H1 (cell line): ENCODE measurements at regions of chr12 and their contacts with region 1.

Region 1: DNA sequence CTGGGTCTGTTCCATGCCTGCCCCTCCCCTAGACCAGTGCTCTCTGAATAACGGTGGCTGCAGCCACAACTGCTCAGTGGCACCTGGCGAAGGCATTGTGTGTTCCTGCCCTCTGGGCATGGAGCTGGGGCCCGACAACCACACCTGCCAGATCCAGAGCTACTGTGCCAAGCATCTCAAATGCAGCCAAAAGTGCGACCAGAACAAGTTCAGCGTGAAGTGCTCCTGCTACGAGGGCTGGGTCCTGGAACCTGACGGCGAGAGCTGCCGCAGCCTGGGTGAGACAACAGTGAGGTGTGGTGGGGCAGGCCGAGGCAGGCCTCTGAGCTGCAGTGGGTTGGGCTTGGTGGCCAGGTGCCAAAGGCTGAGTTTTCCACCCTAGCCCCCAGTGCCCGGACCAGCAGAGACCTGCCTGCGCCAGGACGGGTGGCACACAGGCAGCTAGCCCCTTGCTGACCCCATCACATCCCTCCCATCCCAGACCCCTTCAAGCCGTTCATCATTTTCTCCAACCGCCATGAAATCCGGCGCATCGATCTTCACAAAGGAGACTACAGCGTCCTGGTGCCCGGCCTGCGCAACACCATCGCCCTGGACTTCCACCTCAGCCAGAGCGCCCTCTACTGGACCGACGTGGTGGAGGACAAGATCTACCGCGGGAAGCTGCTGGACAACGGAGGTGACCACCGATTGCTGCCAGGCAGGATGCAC is 28.2 kb upstream of the LRP1-AS start:
- DNase-seq: peak; percentile 50 to 98
- H3K4me3 ChIP-seq: no peak overlapping the region
- H3K27ac ChIP-seq: no peak overlapping the region
- H3K4me1 ChIP-seq: no peaks in the 10 kb centered on the region
- H3K27me3 ChIP-seq: no peaks in the 10 kb centered on the region
- CTCF ChIP-seq: peak in 2 of 3 experiments; percentile 87 to 93; a peak in 3 of 4 replicates
- EP300 ChIP-seq: no peak
- POLR2A ChIP-seq: no peak
- RAD21 ChIP-seq: peak; percentile 45 to 61

Region 2: GRCh38 chr12:57069523-57069922 is 106.1 kb before region 1 on chr12:
- CTCF ChIA-PET with region 1: interaction called, 11 read pairs
- POLR2A ChIA-PET with region 1: no interaction called
- DNase-seq: no peak
- H3K4me3 ChIP-seq: no peak overlapping the region
- H3K27ac ChIP-seq: no peak overlapping the region
- H3K4me1 ChIP-seq: no peaks in the 10 kb centered on the region
- H3K27me3 ChIP-seq: no peaks in the 10 kb centered on the region
- CTCF ChIP-seq: peak in 2 of 3 experiments; percentile 90 to 94; a peak in 3 of 4 replicates
- EP300 ChIP-seq: no peak
- POLR2A ChIP-seq: no peak
- RAD21 ChIP-seq: peak; percentile 95 to 97

Region 3: GRCh38 chr12:57135527-57136326 is 39.9 kb before region 1 on chr12:
- CTCF ChIA-PET with region 1: interaction called, 305 read pairs
- POLR2A ChIA-PET with region 1: interaction called, 55 read pairs
- DNase-seq: no peak
- H3K4me3 ChIP-seq: peak overlapping the region in 1 of 4 experiments; percentile 47; a peak in 4 of 8 replicates
- H3K27ac ChIP-seq: peak overlapping the region; percentile 78
- H3K4me1 ChIP-seq: peaks cover 22 to 53% (median 30%) of the 10 kb centered on the region in 4 experiments
- H3K27me3 ChIP-seq: no peaks in the 10 kb centered on the region
- CTCF ChIP-seq: no peak
- EP300 ChIP-seq: no peak
- POLR2A ChIP-seq: no peak; a peak in 1 of 3 replicates
- RAD21 ChIP-seq: no peak

Region 4: DNA sequence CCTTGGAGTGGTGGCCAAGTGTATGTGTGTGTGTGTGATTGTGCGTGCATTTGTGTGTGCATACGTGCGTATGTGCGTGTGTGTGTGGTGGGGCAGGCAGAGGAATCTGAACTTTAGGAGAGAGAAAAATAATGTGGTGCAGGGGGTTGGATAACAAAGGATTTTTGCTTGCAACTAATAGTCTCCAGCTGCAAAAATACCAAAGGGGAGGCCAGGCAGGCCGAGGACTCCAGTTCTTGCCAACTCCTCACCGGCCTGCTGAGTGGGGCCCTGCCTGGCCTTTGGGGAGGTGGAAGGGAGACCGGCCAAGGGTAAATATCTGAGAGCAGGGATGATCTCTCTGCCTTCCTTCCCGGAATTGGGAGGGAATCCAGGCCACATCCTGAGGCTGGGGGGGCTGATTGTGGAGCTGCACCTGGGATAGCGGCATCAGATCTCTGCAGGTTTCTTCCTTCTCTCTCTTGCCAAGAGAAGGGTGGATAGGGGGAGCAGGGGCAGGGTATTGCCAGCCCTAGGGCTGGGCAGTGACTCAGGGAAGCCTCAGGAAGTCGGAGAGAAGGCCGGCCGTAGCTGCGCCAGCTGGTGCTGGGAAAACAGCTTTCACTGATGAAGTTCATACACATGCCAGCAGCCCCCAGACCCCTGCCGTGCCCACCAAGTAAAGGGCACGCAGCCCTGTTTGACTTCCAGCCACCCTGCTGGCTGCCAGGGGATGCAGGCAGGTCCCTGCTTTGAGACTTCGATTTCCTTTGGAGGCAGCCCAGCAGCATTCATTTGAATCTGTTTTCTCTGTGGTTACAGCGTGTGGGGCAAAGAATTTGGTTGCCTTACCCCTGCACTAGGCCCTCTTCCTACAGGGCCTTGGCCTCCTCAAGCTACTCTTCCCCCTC is 23.6 kb before region 1 on chr12:
- CTCF ChIA-PET with region 1: interaction called, 150 read pairs
- POLR2A ChIA-PET with region 1: interaction called, 75 read pairs
- DNase-seq: no peak
- H3K4me3 ChIP-seq: no peak overlapping the region
- H3K27ac ChIP-seq: no peak overlapping the region
- H3K4me1 ChIP-seq: peaks cover 0 to 4% (median 1%) of the 10 kb centered on the region in 4 experiments; a peak in 4 of 7 replicates
- H3K27me3 ChIP-seq: no peaks in the 10 kb centered on the region
- CTCF ChIP-seq: no peak
- EP300 ChIP-seq: no peak
- POLR2A ChIP-seq: no peak
- RAD21 ChIP-seq: no peak

Region 5: DNA sequence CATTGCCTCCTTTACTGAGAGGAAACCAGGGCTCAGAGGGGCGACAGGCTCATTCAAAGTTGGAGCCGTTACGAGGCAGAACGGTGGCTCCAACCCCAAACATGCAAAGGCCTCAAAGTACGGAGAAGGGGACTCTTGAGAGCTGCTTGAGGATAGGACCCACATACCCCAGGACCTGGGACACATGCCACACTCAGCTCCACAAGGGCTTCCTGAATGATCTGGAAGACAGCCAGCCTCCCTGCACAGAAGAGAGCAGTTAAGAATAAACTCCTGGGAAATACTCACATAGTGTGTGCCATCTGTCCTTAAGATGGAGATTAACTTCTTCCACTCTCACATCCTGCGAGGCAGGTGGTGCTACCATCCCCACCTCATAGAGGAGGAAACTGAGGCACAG is 14.5 kb after region 1 on chr12:
- CTCF ChIA-PET with region 1: interaction called, 389 read pairs
- POLR2A ChIA-PET with region 1: interaction called, 91 read pairs
- DNase-seq: no peak
- H3K4me3 ChIP-seq: no peak overlapping the region
- H3K27ac ChIP-seq: no peak overlapping the region
- H3K4me1 ChIP-seq: no peaks in the 10 kb centered on the region; a peak in 1 of 7 replicates
- H3K27me3 ChIP-seq: no peaks in the 10 kb centered on the region
- CTCF ChIP-seq: no peak
- EP300 ChIP-seq: no peak
- POLR2A ChIP-seq: no peak
- RAD21 ChIP-seq: no peak

Region 6: GRCh38 chr12:57229634-57230380 is 54.2 kb after region 1 on chr12 and contains the start of gene SHMT2:
- CTCF ChIA-PET with region 1: interaction called, 5 read pairs
- POLR2A ChIA-PET with region 1: interaction called, 15 read pairs
- DNase-seq: peak; percentile 91 to 94
- H3K4me3 ChIP-seq: peak within 1 kb of the TSS; percentile 69 to 93 (median 81)
- H3K27ac ChIP-seq: peak within 1 kb of the TSS; percentile 85
- H3K4me1 ChIP-seq: peaks cover 4 to 43% (median 21%) of the 10 kb centered on the region in 4 experiments
- H3K27me3 ChIP-seq: peaks cover 11 to 32% (median 26%) of the 10 kb centered on the region in 4 experiments
- CTCF ChIP-seq: no peak
- EP300 ChIP-seq: 0 out of 3 replicates have a peak, but pooled peaks of 1 of the 2 experiments have one; percentile 37
- POLR2A ChIP-seq: peak in 1 of 2 experiments; percentile 68; a peak in 2 of 3 replicates
- RAD21 ChIP-seq: no peak
- total RNA-seq, gene SHMT2: 274 and 283 TPM in 2 replicates

Region 7: GRCh38 chr12:57568838-57569237 is 393.3 kb after region 1 on chr12:
- CTCF ChIA-PET with region 1: no interaction called
- POLR2A ChIA-PET with region 1: no interaction called
- DNase-seq: no peak
- H3K4me3 ChIP-seq: no peak overlapping the region
- H3K27ac ChIP-seq: no peak overlapping the region
- H3K4me1 ChIP-seq: no peaks in the 10 kb centered on the region
- H3K27me3 ChIP-seq: no peaks in the 10 kb centered on the region
- CTCF ChIP-seq: no peak
- EP300 ChIP-seq: no peak
- POLR2A ChIP-seq: no peak
- RAD21 ChIP-seq: no peak